Activated CD4-positive, alpha-beta memory T cell treated with anti-CD3 and anti-CD28 coated beads for 36 hours (primary cell): ENCODE measurements at regions of chr13 and their contacts with region 1.

Region 1: DNA sequence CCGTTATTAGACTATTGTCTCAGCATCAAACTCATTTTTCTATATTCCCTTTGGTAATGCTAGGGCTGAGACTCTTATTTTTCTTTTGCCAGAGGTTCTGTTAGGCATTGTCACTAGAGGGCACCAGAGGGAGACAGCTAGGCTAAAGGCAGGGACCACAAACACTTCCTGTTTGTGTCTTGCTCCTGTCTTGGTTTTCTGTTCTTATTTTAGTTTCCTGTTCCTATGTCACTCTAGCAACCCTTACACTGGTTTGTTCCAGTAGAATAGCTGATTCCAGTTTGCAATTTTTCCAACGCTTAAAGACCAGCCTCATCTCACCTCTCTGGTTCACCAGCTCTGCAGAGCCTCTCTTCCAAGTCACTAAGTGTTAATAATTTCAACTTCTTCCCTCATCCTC is 772.0 kb downstream of the DIAPH3 start:
- DNase-seq: peak; percentile 54
- H3K4me3 Mint-ChIP-seq: no peak overlapping the region
- H3K27ac Mint-ChIP-seq: no peak overlapping the region
- H3K4me1 Mint-ChIP-seq: no peaks in the 10 kb centered on the region
- H3K27me3 Mint-ChIP-seq: peaks cover 18% of the 10 kb centered on the region

Region 2: DNA sequence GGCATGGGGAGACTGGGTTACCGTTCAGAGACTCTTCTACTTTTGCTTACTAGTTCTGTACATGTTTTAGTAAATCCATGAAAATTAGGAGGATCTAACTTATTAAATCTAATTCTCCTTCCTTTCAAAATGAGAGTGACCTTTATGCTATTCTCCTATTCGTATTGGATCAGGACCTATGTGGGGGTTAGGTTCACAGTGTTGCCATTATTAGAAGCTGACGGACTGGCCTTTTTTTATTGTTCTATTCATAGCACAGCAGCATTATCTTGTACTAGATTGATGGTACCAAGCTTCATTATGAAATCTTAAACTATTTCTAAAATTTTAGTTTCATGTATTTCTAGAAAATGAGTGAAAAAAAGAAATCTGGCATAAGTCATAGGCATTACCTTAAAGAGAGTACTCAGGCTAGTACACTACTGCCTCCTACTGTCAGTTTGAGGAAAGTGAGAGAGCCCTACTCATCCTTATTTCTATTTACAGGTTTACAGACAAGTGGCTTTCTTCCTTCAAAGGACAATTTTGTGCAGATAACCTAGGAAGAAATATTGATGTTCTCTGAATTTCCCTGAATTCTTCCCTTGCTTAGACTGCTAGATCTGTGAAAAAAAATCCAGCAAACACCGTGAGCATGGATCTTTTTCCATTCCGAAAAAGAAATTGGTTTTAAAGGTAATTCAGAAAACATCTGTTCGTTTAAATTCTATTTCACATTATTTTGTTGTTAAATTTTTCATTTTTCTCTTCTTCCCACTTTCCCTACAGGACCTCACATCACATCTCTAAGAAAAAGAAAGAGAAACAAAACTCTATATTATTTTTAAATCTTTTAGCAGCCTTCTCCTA is 286.5 kb after region 1 on chr13:
- CTCF ChIA-PET with region 1: interaction called, 51 read pairs
- POLR2A ChIA-PET with region 1: no interaction called
- intact Hi-C with region 1: loop called (anchors 1 kb)
- DNase-seq: no peak
- H3K4me3 Mint-ChIP-seq: no peak overlapping the region
- H3K27ac Mint-ChIP-seq: no peak overlapping the region
- H3K4me1 Mint-ChIP-seq: no peaks in the 10 kb centered on the region
- H3K27me3 Mint-ChIP-seq: no peaks in the 10 kb centered on the region

Region 3: DNA sequence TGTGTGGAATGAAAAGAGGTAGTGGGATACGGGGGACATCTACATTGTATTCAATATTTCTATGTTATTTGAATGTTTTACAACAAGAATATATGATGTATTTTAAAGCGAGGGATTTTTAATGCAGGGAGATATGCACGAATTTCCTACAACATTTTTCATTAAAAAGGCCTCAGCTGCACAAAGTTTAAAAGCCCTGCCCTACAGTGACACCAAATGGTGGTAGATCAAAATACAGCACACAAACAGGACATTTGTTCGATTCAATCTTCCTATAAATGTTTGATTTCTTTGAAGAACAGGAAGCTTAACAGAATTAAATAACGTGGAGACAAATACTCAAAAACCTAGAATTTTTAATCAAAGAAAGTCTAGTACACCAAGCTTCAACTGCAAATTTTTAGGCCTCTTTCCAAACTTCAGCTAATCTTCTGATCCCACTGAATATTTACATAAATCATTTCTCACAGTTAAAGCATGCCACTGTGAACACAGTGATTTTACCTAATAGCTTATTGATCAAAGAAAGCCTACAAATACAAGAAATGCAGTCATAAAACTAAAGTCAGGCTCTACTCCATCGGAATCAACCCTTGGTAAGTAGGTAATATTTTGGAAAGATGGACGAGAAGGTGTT is 514.8 kb after region 1 on chr13:
- CTCF ChIA-PET with region 1: interaction called, 11 read pairs
- POLR2A ChIA-PET with region 1: no interaction called
- intact Hi-C with region 1: no loop called
- DNase-seq: no peak
- H3K4me3 Mint-ChIP-seq: no peak overlapping the region
- H3K27ac Mint-ChIP-seq: no peak overlapping the region
- H3K4me1 Mint-ChIP-seq: no peaks in the 10 kb centered on the region
- H3K27me3 Mint-ChIP-seq: no peaks in the 10 kb centered on the region

Region 4: GRCh38 chr13:60163478-60164233 is 772.0 kb after region 1 on chr13 and contains the start of gene DIAPH3:
- CTCF ChIA-PET with region 1: no interaction called
- POLR2A ChIA-PET with region 1: no interaction called
- intact Hi-C with region 1: loop called (anchors 5 kb)
- DNase-seq: peak; percentile 97
- H3K4me3 Mint-ChIP-seq: peak within 1 kb of the TSS; percentile 92
- H3K27ac Mint-ChIP-seq: peak within 1 kb of the TSS; percentile 90
- H3K4me1 Mint-ChIP-seq: peaks cover 32% of the 10 kb centered on the region
- H3K27me3 Mint-ChIP-seq: no peaks in the 10 kb centered on the region
- total RNA-seq, gene DIAPH3: 31.3 to 31.9 TPM

Region 5: DNA sequence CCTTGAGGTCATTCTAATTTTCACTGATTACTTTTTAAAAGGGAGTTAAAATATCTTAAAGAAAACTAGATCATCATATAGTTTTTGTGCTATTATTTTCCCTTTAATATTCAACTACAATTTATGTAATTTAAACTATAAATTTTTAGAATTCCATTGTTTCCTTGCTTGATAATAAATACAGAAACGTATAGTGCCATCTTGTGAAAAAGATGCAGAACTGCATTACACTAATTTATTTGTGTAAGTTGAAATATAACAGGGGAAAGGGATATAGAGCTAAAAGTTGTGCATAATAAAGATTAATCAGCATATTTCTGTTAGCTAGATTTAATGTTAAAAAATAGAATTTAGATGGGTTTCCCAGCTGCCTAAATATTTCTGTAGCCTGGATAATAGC is 943.8 kb after region 1 on chr13:
- CTCF ChIA-PET with region 1: interaction called, 3 read pairs
- POLR2A ChIA-PET with region 1: no interaction called
- intact Hi-C with region 1: loop called (anchors 1 kb)
- DNase-seq: no peak
- H3K4me3 Mint-ChIP-seq: no peak overlapping the region
- H3K27ac Mint-ChIP-seq: no peak overlapping the region
- H3K4me1 Mint-ChIP-seq: no peaks in the 10 kb centered on the region
- H3K27me3 Mint-ChIP-seq: no peaks in the 10 kb centered on the region

Region 6: DNA sequence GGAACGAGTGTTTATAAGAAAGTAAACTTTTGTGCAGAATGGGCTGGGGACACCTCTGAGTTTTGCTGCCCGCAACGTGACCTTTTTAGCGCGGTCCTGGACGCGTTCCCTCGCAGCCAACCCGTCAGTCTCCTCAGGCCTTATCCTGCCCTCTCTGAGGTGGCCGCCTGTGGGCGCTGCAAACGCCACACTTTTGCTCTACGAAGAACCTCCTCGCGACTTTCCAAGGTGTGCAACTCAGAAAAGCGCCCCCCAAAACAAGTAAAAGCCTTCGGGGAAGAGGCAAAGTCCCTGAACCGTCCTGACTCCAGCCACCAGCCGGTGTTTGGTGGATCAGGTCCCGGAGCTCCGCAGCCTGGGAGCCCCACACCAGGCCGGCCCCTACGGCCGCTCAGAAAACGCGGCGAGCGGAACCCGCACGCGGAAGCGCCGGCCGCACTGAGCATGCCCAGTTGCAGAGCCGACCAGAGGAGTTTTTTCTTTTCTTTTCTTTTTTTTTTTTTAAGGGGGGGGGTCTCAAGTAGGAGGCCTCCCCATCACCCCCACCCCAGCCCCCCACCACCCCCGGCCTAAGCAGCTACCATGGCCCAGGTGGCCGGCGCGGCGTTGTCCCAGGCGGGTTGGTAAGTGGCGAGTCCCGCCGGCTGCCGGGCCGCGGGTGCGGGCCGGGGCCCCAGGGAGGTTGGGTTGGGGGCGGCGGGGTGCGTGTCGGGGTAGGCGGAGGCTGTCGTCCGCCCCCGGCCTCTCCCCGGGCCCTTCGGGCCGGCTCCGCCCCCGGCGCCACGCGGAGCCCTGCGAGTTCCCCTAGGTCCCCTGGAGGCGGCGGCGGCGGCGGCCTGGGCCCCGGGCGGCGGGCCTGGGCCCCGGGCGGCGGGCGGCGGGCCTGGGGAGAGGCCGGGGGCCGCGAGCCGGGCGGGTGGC is 1005.3 kb after region 1 on chr13 and contains the start of gene TDRD3:
- CTCF ChIA-PET with region 1: no interaction called
- POLR2A ChIA-PET with region 1: no interaction called
- intact Hi-C with region 1: loop called (anchors 2 kb)
- DNase-seq: peak; percentile 89
- H3K4me3 Mint-ChIP-seq: peak within 1 kb of the TSS; percentile 90
- H3K27ac Mint-ChIP-seq: peak within 1 kb of the TSS; percentile 95
- H3K4me1 Mint-ChIP-seq: peaks cover 31% of the 10 kb centered on the region
- H3K27me3 Mint-ChIP-seq: no peaks in the 10 kb centered on the region
- total RNA-seq, gene TDRD3: 16.4 to 16.5 TPM

Region 7: GRCh38 chr13:60431108-60431700 is 1039.5 kb after region 1 on chr13:
- CTCF ChIA-PET with region 1: interaction called, 11 read pairs
- POLR2A ChIA-PET with region 1: no interaction called
- intact Hi-C with region 1: loop called (anchors 1 kb)
- DNase-seq: no peak
- H3K4me3 Mint-ChIP-seq: no peak overlapping the region
- H3K27ac Mint-ChIP-seq: no peak overlapping the region
- H3K4me1 Mint-ChIP-seq: peaks cover 27% of the 10 kb centered on the region
- H3K27me3 Mint-ChIP-seq: no peaks in the 10 kb centered on the region

Region 8: DNA sequence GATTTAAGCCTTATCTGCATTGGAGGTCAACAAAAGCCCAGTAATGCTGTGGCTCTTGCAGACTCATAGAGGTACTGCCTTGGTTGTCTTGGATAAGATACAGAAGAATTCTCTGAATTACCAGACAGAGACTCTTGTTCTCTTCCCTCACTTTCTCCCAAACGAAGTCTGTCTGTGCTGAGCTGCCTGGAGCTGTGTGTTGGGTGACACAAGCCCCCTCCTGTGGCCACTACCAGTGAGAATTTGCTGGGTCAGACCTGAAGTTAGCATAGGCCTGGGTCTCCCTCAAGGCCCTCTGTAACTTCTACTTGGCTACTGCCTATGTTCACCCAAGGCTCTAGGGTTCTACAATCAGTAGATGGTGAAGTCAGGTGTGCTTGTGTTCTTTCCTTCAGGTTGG is 1611.0 kb after region 1 on chr13:
- CTCF ChIA-PET with region 1: no interaction called
- POLR2A ChIA-PET with region 1: no interaction called
- intact Hi-C with region 1: no loop called
- DNase-seq: no peak
- H3K4me3 Mint-ChIP-seq: no peak overlapping the region
- H3K27ac Mint-ChIP-seq: no peak overlapping the region
- H3K4me1 Mint-ChIP-seq: no peaks in the 10 kb centered on the region
- H3K27me3 Mint-ChIP-seq: no peaks in the 10 kb centered on the region